ENCODE measurements at regions of chr9 and their contacts with region 1.

Region 1: DNA sequence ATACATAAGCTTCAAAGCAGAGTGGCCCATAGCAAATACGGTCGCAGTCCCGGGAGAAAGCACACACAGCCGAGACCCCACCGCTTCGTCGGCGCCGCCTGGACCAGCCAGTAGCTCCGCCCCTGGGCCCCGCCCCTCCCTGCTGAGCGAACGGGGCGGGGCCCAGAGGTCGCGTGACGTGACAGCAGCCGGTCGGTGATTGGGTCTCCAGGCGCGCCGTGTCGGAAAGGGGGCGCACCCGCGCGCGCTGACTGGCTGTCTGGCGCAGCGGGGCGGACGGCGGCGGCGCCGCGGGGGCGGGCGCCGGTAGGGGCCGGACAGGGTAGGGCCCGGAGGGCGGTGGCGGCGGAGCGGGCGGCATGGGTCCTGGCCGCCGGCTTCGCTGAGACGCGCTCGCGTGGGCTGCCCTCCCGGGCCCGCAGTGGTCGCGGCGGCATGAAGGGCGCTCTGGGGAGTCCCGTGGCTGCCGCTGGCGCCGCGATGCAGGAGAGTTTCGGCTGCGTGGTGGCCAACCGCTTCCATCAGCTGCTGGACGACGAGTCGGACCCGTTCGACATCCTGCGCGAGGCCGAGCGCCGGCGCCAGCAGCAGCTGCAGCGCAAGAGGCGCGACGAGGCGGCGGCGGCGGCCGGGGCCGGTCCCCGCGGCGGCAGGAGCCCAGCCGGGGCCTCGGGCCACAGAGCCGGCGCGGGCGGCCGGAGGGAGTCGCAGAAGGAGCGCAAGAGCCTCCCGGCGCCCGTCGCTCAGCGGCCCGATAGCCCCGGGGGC is at the start of gene HABP4:
- DNase-seq: peak; percentile 98 to 99
- ATAC-seq: peak; percentile 99
- H3K4me3 ChIP-seq: peak within 1 kb of the TSS; percentile 92 to 94
- H3K27ac ChIP-seq: peak within 1 kb of the TSS; percentile 79 to 99
- H3K4me1 ChIP-seq: no peaks in the 10 kb centered on the region
- H3K27me3 ChIP-seq: no peaks in the 10 kb centered on the region
- total RNA-seq, gene HABP4: 29.0 to 37.0 TPM

Region 2: GRCh38 chr9:96327694-96328352 is 122.2 kb before region 1 on chr9:
- intact Hi-C with region 1: loop called in 1 of 2 experiments (anchors 10 kb)
- DNase-seq: no peak
- ATAC-seq: peak; percentile 86
- H3K4me3 ChIP-seq: no peak overlapping the region
- H3K27ac ChIP-seq: no peak overlapping the region
- H3K4me1 ChIP-seq: no peaks in the 10 kb centered on the region
- H3K27me3 ChIP-seq: no peaks in the 10 kb centered on the region

Region 3: GRCh38 chr9:96423322-96423979 is 26.6 kb before region 1 on chr9:
- intact Hi-C with region 1: loop called (anchors 2 to 5 kb)
- DNase-seq: no peak
- ATAC-seq: no peak
- H3K4me3 ChIP-seq: no peak overlapping the region
- H3K27ac ChIP-seq: peak overlapping the region in 1 of 2 donors; percentile 61
- H3K4me1 ChIP-seq: peaks cover 0 to 3% of the 10 kb centered on the region in 2 donors
- H3K27me3 ChIP-seq: no peaks in the 10 kb centered on the region

Region 4: GRCh38 chr9:96500696-96501632 is 50.9 kb after region 1 on chr9:
- intact Hi-C with region 1: no loop called
- DNase-seq: no peak
- ATAC-seq: no peak
- H3K4me3 ChIP-seq: no peak overlapping the region
- H3K27ac ChIP-seq: no peak overlapping the region
- H3K4me1 ChIP-seq: peaks cover 0 to 3% of the 10 kb centered on the region in 2 donors
- H3K27me3 ChIP-seq: no peaks in the 10 kb centered on the region

Region 5: GRCh38 chr9:96566498-96567207 is 116.6 kb after region 1 on chr9:
- intact Hi-C with region 1: loop called in 1 of 2 experiments (anchors 5 kb)
- DNase-seq: peak; percentile 90 to 93
- ATAC-seq: peak; percentile 93
- H3K4me3 ChIP-seq: peak overlapping the region; percentile 90 to 92
- H3K27ac ChIP-seq: peak overlapping the region; percentile 84 to 93
- H3K4me1 ChIP-seq: peaks cover 0 to 3% of the 10 kb centered on the region in 2 donors
- H3K27me3 ChIP-seq: no peaks in the 10 kb centered on the region

Region 6: GRCh38 chr9:96654443-96655197 is 204.6 kb after region 1 on chr9:
- intact Hi-C with region 1: loop called in 1 of 2 experiments (anchors 2 kb)
- DNase-seq: peak; percentile 92 to 96
- ATAC-seq: peak; percentile 91
- H3K4me3 ChIP-seq: peak overlapping the region; percentile 65 to 71
- H3K27ac ChIP-seq: peak overlapping the region; percentile 93 to 99
- H3K4me1 ChIP-seq: no peaks in the 10 kb centered on the region
- H3K27me3 ChIP-seq: no peaks in the 10 kb centered on the region